ENCODE measurements at regions of chr15 and their contacts with region 1.

Region 1: DNA sequence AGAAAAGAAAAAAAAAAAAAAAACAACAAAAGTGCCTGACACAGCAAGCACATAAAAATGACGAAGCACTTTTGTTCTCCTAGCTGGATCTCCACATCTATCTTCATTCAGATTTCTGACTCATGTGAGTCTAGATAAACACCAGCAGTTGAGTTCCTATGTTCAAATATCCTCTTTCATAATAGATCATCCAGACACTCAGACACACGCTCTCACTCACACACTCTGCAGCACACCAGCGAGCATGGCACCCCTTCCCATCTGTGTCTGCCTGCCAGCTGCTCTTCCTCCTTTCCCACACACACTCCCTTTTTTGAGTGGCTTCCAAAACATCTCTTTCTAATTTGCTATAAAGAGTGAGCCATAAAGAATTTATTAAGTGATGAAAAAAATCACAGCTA is 19.8 kb upstream of the CELF6 start:
- H3K4me3 Mint-ChIP-seq: no peak overlapping the region
- H3K27ac Mint-ChIP-seq: peak overlapping the region; percentile 66
- H3K4me1 Mint-ChIP-seq: peaks cover 35% of the 10 kb centered on the region
- H3K27me3 Mint-ChIP-seq: no peaks in the 10 kb centered on the region

Region 2: GRCh38 chr15:72118400-72118978 is 221.3 kb before region 1 on chr15 and contains the start of gene SENP8:
- intact Hi-C with region 1: no loop called
- H3K4me3 Mint-ChIP-seq: peak within 1 kb of the TSS; percentile 91
- H3K27ac Mint-ChIP-seq: peak within 1 kb of the TSS; percentile 99
- H3K4me1 Mint-ChIP-seq: peaks cover 38% of the 10 kb centered on the region
- H3K27me3 Mint-ChIP-seq: no peaks in the 10 kb centered on the region

Region 3: GRCh38 chr15:72358650-72359288 is 19.0 kb after region 1 on chr15:
- intact Hi-C with region 1: no loop called
- H3K4me3 Mint-ChIP-seq: no peak overlapping the region
- H3K27ac Mint-ChIP-seq: peak overlapping the region; percentile 36
- H3K4me1 Mint-ChIP-seq: peaks cover 40% of the 10 kb centered on the region
- H3K27me3 Mint-ChIP-seq: no peaks in the 10 kb centered on the region

Region 4: DNA sequence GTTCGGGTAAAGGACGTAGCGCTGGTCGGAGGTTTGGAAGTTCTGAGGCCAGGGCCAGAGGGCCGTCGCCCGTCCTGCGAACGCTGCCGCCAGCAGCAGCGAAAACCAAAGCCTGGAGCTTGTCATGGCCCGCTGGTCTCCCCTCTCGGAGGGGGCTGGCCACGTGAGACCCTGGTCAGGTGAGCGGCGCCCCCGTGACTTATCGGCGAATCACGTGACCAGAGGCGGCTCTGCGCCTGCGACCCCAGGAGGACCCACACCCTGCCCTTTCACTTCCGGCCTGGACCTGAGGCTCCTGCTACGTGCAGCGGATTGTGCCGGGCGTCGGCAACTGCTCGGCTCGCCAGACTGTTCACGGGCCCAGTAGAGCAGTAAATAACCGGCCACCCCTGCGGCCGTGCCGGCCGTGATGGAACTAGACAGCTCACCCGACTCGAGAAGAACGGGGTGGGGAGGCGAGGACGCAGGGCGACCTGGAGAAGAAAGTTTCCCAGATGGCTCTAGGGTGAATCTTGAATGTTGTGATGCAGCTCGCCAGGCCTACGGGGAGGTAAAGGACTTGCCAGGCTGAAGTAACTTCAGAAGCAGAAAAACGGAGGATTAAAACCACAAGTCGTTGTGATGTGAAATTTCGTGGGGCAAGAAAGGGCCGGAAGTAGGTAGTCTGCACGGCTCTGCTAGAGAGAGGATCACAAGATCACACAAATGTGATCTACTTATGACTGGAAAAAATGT is 36.2 kb after region 1 on chr15 and contains the start of gene HEXA:
- intact Hi-C with region 1: no loop called
- H3K4me3 Mint-ChIP-seq: peak within 1 kb of the TSS; percentile 99
- H3K27ac Mint-ChIP-seq: peak within 1 kb of the TSS; percentile 99
- H3K4me1 Mint-ChIP-seq: peaks cover 58% of the 10 kb centered on the region
- H3K27me3 Mint-ChIP-seq: no peaks in the 10 kb centered on the region

Region 5: DNA sequence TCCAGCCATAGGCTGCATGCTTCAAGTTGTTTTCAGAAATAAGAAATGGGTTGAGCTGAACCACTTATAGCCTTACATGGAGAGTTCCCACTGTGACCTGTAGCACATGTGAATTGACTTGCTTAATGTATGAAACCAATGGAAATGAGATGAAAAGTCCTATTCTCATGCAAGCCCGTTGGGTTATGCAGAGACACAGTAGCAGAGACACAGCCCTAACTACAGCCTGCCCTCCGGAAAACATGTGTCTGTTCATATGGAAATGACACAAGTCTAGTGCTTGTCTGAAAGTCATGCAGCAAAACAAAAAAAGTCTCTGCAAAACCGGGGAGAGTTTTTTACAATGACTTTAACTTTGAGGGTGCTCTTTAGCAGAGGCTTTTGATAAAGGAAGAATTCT is 331.8 kb after region 1 on chr15:
- intact Hi-C with region 1: loop called (anchors 10 kb)
- H3K4me3 Mint-ChIP-seq: no peak overlapping the region
- H3K27ac Mint-ChIP-seq: no peak overlapping the region
- H3K4me1 Mint-ChIP-seq: peaks cover 9% of the 10 kb centered on the region
- H3K27me3 Mint-ChIP-seq: peaks cover 18% of the 10 kb centered on the region